Vagina (tissue), 2 donors: ENCODE measurements at regions of chr20 and their contacts with region 1.

Region 1: DNA sequence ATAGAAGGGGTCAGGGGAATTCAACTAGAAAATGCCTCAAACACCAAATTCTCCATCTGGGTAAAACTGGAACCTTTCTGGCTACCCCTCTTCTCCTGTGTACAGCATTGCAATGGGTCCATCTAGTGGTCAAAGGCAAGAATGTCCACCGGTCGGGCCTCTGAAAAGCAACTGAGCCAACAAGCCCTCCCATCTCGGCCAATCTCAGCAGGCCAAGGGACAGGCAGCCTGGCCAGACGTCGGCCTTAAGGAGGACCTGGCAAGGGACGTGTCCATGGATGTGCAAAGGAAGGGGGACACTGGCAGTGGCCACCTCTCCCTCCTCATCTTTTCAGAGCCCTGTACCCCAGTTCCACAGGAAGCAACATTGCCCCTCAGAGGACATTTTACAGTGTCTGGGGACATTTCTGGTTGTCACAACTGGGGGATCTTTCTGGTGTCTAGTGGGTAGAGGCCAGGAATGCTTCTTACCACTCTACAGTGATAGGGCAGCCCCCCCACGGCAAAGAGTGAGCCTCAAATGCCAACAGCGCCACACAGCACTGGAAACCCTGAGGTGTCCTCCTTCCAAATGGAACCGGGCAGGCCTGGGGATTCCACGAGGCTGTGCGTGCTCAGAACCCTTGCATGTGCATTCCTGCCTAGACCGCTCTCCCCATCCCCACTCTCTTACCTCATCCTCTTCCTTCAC is 99.8 kb upstream of the FOXA2 start:
- DNase-seq: peak in 1 of 2 donors; percentile 85
- H3K4me3 ChIP-seq: no peak overlapping the region
- H3K27ac ChIP-seq: no peak overlapping the region
- H3K4me1 ChIP-seq: no peaks in the 10 kb centered on the region
- H3K27me3 ChIP-seq: no peaks in the 10 kb centered on the region
- CTCF ChIP-seq: peak; percentile 31 to 73 (median 70)
- POLR2A ChIP-seq: no peak

Region 2: GRCh38 chr20:22226849-22227700 is 457.1 kb before region 1 on chr20:
- intact Hi-C with region 1: no loop called
- DNase-seq: no peak
- H3K4me3 ChIP-seq: no peak overlapping the region
- H3K27ac ChIP-seq: no peak overlapping the region
- H3K4me1 ChIP-seq: no peaks in the 10 kb centered on the region
- H3K27me3 ChIP-seq: no peaks in the 10 kb centered on the region
- CTCF ChIP-seq: no peak
- POLR2A ChIP-seq: no peak

Region 3: DNA sequence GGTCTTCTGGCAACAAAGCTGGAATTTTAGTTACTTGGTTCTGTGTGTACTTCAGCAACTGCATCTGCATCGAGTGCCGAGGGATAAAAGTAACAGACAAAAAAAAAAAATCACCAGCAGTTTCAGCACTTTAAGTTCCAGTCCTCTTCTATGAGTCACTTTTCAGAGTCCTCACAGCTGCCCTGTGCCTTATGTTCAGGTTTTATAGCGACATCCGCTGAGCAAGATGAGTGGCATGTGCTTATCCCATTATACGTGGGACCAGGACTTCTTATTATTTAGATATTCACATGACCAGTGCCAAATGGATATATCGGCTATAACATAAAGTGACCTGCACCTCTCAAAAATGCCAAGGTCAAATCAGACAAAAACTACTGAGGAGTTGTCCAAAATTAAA is 342.7 kb before region 1 on chr20:
- intact Hi-C with region 1: loop called (anchors 5 kb)
- DNase-seq: no peak
- H3K4me3 ChIP-seq: no peak overlapping the region
- H3K27ac ChIP-seq: no peak overlapping the region
- H3K4me1 ChIP-seq: no peaks in the 10 kb centered on the region
- H3K27me3 ChIP-seq: no peaks in the 10 kb centered on the region
- CTCF ChIP-seq: no peak
- POLR2A ChIP-seq: no peak

Region 4: DNA sequence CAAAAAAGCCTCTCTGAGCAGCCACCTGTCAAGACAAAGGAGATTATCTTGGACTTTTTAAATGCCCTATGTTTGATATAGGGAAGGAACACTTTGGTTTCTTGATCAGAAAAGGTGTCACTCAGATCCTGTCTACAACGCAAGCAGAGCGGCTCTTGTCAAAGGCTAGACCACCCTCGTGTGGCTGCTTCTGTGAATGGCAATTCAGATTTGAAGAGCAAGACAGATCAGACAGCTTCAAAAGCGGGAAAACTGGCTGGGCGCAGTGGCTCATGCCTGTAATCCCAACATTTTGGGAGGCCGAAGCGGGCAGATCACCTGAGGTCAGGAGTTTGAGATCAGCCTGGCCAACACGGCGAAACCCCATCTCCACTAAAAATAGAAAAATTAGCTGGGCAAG is 656.3 kb after region 1 on chr20:
- intact Hi-C with region 1: loop called (anchors 5 kb)
- DNase-seq: no peak
- H3K4me3 ChIP-seq: no peak overlapping the region
- H3K27ac ChIP-seq: no peak overlapping the region
- H3K4me1 ChIP-seq: no peaks in the 10 kb centered on the region
- H3K27me3 ChIP-seq: no peaks in the 10 kb centered on the region
- CTCF ChIP-seq: peak; percentile 35 to 64 (median 35)
- POLR2A ChIP-seq: no peak